ENCODE measurements at regions of chr12 and their contacts with region 1.

Region 1: GRCh38 chr12:11862798-11863197 is 207.9 kb upstream of the BCL2L14 start:
- DNase-seq: no peak
- H3K4me3 ChIP-seq: no peak overlapping the region
- H3K27me3 ChIP-seq: no peaks in the 10 kb centered on the region
- CTCF ChIP-seq: no peak

Region 2: DNA sequence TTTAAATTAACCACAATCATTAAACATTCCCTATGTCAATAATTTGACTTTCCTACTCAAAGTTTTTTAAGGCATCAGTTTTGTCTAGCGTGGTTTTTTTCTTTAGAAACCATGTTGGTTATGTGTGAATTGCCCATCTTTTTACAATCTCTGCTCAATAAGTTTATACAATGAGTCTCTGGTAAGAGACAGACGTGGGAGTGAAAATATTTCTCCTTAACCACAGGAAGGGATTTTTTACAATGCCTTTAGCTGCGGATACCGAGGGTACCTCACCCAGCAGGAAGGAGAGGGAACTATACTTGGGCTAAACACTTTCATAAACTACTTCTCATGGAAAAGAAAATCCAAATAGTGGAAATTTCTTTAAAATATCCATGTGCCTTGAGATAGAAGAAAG is 16.5 kb after region 1 on chr12:
- CTCF ChIA-PET with region 1: no interaction called
- POLR2A ChIA-PET with region 1: interaction called, 13 read pairs
- DNase-seq: peak; percentile 14
- H3K4me3 ChIP-seq: no peak overlapping the region
- H3K27me3 ChIP-seq: no peaks in the 10 kb centered on the region
- CTCF ChIP-seq: no peak

Region 3: DNA sequence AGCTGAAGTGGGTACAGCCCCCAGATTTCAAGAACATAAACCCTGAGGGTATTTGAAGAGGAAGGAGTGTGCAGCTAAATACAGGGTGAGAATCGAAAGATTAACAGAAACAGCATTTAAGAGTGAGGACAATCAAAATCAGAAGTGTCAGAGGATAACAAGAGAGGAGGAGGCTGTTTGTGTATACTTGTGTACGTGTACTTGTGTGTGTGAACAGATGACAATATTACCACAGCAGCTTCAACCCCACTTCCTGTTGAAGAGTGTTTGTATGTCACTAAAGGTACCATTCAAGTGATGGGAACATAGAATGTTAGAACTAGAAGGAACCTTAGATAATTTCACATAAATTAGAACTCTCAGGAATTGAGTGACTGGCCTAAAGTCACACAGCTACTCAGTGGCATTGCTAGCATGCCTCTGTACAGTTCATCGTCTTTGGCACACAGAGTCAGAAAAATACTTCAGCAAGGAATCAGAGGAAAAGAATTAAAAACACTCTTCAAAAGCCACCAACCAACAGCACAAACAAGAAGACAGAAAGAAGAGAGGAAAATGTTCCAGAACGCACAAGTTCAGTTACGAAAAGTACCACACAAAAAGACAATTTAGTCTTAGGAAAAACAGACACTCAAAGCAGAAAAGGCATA is 43.6 kb after region 1 on chr12:
- CTCF ChIA-PET with region 1: no interaction called
- POLR2A ChIA-PET with region 1: no interaction called
- DNase-seq: peak; percentile 62
- H3K4me3 ChIP-seq: no peak overlapping the region
- H3K27me3 ChIP-seq: no peaks in the 10 kb centered on the region
- CTCF ChIP-seq: no peak

Region 4: GRCh38 chr12:12582895-12583303 is 720.1 kb after region 1 on chr12:
- CTCF ChIA-PET with region 1: no interaction called
- POLR2A ChIA-PET with region 1: no interaction called
- DNase-seq: no peak
- H3K4me3 ChIP-seq: no peak overlapping the region
- H3K27me3 ChIP-seq: no peaks in the 10 kb centered on the region
- CTCF ChIP-seq: no peak